Panc1 (cell line): ENCODE measurements at regions of chr1 and their contacts with region 1.

Region 1: DNA sequence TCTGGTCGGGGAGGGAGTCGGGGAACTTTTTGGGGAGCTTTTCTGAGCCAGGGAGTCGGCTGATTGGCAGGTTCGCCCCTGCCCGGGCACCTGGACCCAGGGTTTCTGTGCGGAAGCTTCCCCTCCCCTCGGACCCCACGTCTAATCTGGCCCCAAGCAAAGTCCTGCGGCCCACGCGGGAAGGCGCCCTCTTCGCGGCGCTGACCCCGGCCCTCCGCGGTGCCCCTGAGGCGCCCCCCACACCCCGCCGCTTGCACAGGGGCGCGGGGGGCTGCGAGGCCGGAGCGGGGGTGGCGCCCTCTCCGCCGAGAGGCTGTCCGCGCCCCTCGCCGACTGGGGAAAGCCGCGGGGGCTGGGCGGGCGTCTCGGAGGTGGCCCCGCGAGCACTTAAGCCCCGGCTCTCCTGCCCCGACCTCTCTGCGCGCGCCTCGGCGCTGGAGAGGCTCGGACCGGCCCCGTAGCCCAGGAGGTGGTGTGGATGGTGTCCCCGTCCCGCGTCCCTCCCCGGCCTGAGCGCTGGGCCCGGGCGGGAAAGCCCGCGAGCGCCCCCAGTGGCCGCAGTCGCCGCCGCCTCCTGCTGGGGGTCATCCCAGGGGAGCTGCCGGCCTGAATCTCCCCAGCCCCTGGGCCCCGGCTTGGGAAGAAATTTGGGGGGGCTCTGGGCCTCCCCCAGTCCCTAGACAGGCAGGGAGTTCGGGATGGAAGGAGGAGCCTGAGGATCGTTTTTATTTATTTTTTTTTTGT is 1.7 kb upstream of the HES4 start:
- DNase-seq: no peak
- ATAC-seq: peak; percentile 64
- H3K4me3 ChIP-seq: peak overlapping the region; percentile 56 to 65
- H3K27ac ChIP-seq: peak overlapping the region; percentile 80
- H3K4me1 ChIP-seq: peaks cover 35% of the 10 kb centered on the region
- H3K27me3 ChIP-seq: no peaks in the 10 kb centered on the region
- CTCF ChIP-seq: peak; percentile 99

Region 2: DNA sequence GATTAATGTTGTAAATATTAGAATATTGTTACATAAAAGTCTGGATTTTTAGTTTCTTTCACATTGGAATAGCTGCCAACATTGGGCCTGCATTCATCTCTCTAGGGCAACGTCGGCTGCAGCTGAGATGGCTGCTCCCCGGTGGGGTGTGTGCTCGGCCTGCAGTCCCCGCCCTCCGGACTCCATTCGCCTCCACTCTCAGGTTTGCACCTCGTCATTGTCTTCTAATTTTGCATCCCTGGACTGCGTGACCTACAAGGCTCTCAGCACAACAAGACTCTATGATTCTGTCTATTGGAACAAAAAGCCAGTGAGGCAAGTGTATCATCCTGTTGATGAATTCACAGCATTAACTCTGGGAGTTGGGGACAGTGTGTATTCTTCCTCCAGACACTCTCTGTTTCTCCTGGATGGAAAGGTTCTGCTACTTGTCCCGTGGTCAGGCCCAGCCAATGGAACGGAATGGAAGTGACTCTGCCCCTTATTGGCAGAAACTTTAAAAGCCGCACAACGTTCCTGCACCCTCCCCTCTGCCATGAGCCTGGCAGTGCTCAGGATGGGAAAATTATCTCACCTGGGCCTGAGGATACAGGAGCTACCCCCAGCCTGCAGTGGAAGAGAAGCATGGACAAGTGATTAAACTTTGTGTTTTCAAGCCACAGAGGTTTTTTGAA is 182.9 kb before region 1 on chr1:
- CTCF ChIA-PET with region 1: no interaction called
- POLR2A ChIA-PET with region 1: no interaction called
- in situ Hi-C with region 1: no loop called
- intact Hi-C with region 1: no loop called
- DNase-seq: no peak
- ATAC-seq: peak; percentile 58
- H3K4me3 ChIP-seq: no peak overlapping the region
- H3K27ac ChIP-seq: no peak overlapping the region
- H3K4me1 ChIP-seq: no peaks in the 10 kb centered on the region
- H3K27me3 ChIP-seq: no peaks in the 10 kb centered on the region
- CTCF ChIP-seq: no peak

Region 3: DNA sequence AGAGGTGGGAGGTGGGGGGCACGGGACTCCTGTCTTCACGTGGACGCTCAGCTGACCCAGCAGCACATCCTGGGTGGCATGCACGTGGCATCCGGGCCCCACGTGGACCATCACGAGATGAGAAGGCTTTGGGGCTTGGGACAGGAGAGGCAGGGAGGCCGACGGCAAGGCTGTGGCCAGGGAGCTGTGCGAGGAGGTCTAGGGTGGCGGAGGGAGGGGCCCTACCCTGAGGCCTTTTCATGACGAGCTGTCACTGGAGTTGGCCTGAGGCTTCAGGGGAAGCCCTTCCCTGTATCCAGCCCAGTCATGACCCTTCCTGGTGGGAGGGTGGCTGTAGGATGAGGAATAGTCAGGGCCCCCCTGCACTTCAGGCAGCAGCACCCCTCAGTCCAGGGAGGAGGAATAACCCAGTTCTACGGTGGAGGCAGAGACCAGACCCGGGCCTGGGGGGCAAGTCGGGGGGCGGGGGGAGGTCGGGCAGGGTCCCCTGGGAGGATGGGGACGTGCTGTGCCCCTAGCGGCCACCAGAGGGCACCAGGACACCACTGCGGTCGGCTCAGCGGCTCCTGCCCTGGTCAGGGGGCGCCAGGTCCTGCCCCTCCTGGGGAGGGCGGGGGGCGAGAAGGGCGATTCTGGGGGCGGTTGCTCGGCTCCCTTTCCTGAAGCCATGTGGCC is 17.7 kb before region 1 on chr1:
- CTCF ChIA-PET with region 1: interaction called, 11 read pairs
- POLR2A ChIA-PET with region 1: no interaction called
- in situ Hi-C with region 1: no loop called
- intact Hi-C with region 1: no loop called
- DNase-seq: no peak
- ATAC-seq: peak; percentile 74
- H3K4me3 ChIP-seq: peak overlapping the region; percentile 18 to 29; a peak in 3 of 4 replicates
- H3K27ac ChIP-seq: no peak overlapping the region
- H3K4me1 ChIP-seq: no peaks in the 10 kb centered on the region; the same call in 1 of the 2 replicates
- H3K27me3 ChIP-seq: no peaks in the 10 kb centered on the region
- CTCF ChIP-seq: peak; percentile 98

Region 4: DNA sequence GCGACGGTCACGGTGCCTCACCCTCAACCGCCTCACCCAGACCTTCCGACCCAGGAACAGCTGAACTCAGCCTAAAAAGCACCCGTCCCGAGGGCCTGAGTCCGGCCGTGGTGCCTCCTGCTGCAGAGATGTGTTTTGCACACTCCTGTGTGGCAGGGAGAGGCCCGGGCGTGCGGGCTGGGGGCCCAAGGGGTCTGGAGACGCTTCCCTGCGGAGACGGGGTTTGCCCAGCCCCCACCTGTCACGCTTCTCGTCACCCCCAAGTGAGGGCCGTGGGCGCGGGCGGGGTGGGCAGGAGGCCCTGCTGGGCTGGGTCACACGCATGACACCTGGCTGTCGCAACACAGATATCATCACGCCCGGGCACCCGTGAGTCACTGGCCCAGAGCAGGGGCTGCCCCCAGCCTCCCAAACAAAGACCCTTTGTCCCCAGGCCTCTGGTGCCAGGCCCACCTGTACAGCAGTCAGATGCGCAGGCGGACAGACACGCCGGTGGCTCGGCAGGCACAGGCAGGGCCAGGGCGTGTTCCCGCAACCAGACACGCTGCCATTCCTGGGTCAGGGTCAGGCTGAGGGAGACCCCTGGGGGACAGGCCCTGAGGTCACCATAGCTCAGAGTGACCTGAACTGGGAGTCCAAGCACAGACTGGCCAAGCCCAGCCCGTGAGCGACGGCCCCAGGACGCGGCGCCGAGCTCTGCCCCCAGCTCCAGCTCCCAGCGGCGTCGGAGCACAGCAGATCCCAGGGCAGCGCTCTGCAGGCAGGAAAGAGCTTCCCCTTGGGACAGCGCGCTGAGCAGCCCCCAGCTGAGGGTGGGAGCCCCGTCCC is 236.5 kb after region 1 on chr1:
- CTCF ChIA-PET with region 1: no interaction called
- POLR2A ChIA-PET with region 1: no interaction called
- in situ Hi-C with region 1: no loop called
- intact Hi-C with region 1: no loop called
- DNase-seq: no peak
- ATAC-seq: peak; percentile 19
- H3K4me3 ChIP-seq: peak overlapping the region in 1 of 2 experiments; percentile 16; a peak in 1 of 4 replicates
- H3K27ac ChIP-seq: peak overlapping the region; percentile 82
- H3K4me1 ChIP-seq: peaks cover 75% of the 10 kb centered on the region
- H3K27me3 ChIP-seq: no peaks in the 10 kb centered on the region
- CTCF ChIP-seq: no peak

Region 5: DNA sequence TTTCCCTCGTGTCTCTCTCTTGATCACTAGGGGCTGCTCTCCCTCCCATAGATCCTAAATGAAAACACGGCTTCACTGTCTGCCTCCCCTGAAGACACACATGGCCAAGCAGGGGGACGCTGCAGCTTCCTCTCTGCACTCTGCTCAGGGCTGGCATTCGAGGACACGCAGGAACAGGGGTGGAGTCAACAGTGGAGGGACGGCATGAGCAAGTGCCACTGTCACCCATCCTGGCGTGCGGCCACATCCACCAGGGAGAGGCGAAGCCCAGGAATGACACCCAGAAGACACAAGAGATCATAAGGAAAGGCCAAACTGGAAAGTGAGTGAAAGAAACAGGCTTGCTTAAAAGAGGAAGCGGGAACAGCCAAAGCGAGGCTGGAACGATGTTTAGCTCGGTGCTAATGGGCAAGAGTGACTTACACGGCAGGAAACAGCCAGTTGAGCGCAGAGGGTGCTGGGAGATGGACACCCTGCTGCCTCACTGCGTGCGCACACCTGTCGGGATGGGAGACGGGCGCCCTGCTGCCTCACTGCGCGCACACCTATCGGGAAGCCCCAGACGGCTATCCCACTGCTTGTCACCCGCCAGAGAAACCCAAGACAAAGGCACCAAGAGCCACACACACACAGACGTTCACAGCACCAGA is 258.4 kb after region 1 on chr1:
- CTCF ChIA-PET with region 1: no interaction called
- POLR2A ChIA-PET with region 1: no interaction called
- in situ Hi-C with region 1: no loop called
- intact Hi-C with region 1: no loop called
- DNase-seq: no peak
- ATAC-seq: no peak
- H3K4me3 ChIP-seq: no peak overlapping the region
- H3K27ac ChIP-seq: no peak overlapping the region
- H3K4me1 ChIP-seq: no peaks in the 10 kb centered on the region
- H3K27me3 ChIP-seq: no peaks in the 10 kb centered on the region
- CTCF ChIP-seq: no peak